ENCODE measurements at regions of chr12 and their contacts with region 1.

Region 1: GRCh38 chr12:92570056-92570753 is 132.6 kb upstream of the PLEKHG7 start:
- DNase-seq: peak; percentile 44 to 84 (median 47)
- ATAC-seq: peak; percentile 85
- H3K4me3 ChIP-seq: no peak overlapping the region
- H3K27ac ChIP-seq: no peak overlapping the region
- H3K4me1 ChIP-seq: no peaks in the 10 kb centered on the region
- H3K27me3 ChIP-seq: no peaks in the 10 kb centered on the region
- CTCF ChIP-seq: peak; percentile 53 to 77 (median 73); a peak in 5 of 6 replicates
- EP300 ChIP-seq: no peak
- POLR2A ChIP-seq: no peak
- RAD21 ChIP-seq: peak; percentile 97 to 98

Region 2: GRCh38 chr12:91361864-91362263 is 1208.3 kb before region 1 on chr12:
- CTCF ChIA-PET with region 1: interaction called, 13 read pairs
- POLR2A ChIA-PET with region 1: no interaction called
- in situ Hi-C with region 1: no loop called
- intact Hi-C with region 1: no loop called
- DNase-seq: peak; percentile 12 to 36 (median 29)
- ATAC-seq: peak; percentile 73
- H3K4me3 ChIP-seq: no peak overlapping the region
- H3K27ac ChIP-seq: no peak overlapping the region
- H3K4me1 ChIP-seq: no peaks in the 10 kb centered on the region
- H3K27me3 ChIP-seq: no peaks in the 10 kb centered on the region
- CTCF ChIP-seq: peak in 1 of 3 experiments; percentile 60; a peak in 3 of 6 replicates
- EP300 ChIP-seq: no peak
- POLR2A ChIP-seq: no peak
- RAD21 ChIP-seq: peak; percentile 40 to 55; a peak in 3 of 4 replicates

Region 3: GRCh38 chr12:91388552-91388965 is 1181.6 kb before region 1 on chr12:
- CTCF ChIA-PET with region 1: interaction called, 24 read pairs
- POLR2A ChIA-PET with region 1: no interaction called
- in situ Hi-C with region 1: loop called (anchors 5 kb)
- intact Hi-C with region 1: no loop called
- DNase-seq: no peak
- ATAC-seq: no peak
- H3K4me3 ChIP-seq: no peak overlapping the region
- H3K27ac ChIP-seq: no peak overlapping the region
- H3K4me1 ChIP-seq: no peaks in the 10 kb centered on the region; a peak in 2 of 5 replicates
- H3K27me3 ChIP-seq: no peaks in the 10 kb centered on the region
- CTCF ChIP-seq: no peak
- EP300 ChIP-seq: no peak
- POLR2A ChIP-seq: no peak
- RAD21 ChIP-seq: no peak

Region 4: GRCh38 chr12:91883781-91884180 is 686.4 kb before region 1 on chr12:
- CTCF ChIA-PET with region 1: no interaction called
- POLR2A ChIA-PET with region 1: no interaction called
- in situ Hi-C with region 1: no loop called
- intact Hi-C with region 1: loop called (anchors 5 kb)
- DNase-seq: no peak
- ATAC-seq: no peak
- H3K4me3 ChIP-seq: no peak overlapping the region
- H3K27ac ChIP-seq: no peak overlapping the region
- H3K4me1 ChIP-seq: no peaks in the 10 kb centered on the region
- H3K27me3 ChIP-seq: no peaks in the 10 kb centered on the region
- CTCF ChIP-seq: no peak
- EP300 ChIP-seq: no peak
- POLR2A ChIP-seq: no peak
- RAD21 ChIP-seq: no peak

Region 5: DNA sequence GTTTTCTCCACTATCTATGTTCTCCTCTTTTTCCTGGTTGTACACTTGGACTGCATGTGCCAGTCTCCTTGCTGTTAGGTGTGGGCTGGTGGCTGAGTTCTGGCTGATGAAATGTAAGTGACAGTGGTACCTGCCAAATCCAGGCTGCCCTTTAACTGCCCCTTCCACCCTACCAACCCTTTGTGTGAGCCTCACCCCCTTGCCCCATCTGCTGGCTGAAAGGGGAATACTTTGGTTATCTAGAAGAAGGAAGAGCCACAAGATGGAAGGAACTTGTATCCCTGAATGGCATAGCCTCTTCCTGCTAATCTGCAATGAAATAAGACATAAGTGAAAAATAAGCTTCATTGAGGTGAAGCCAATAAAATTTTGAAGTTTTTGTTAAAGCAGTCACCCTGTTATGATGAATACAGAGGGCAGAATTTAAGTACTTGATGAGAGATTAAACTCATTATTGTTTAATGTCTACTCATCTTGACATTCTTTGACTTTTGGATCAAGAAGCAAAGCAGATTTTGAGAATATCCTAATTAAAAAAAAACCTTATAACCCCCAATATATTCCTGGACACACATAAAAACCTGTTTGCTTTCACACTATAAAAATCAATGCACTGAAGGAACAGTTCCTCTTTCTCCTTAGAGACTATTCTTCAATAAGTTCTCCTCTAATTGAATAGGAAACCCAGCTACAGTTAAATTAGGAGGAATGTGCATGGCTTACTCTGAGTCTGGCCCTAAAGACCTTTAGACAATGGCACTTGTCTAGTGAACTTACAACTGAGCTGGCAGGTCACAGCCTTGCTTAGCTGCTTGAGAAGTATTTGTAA is 161.9 kb before region 1 on chr12:
- CTCF ChIA-PET with region 1: no interaction called
- POLR2A ChIA-PET with region 1: no interaction called
- in situ Hi-C with region 1: no loop called
- intact Hi-C with region 1: loop called (anchors 2 kb)
- DNase-seq: peak; percentile 23 to 70 (median 41)
- ATAC-seq: peak; percentile 63
- H3K4me3 ChIP-seq: no peak overlapping the region
- H3K27ac ChIP-seq: no peak overlapping the region
- H3K4me1 ChIP-seq: peaks cover 7 to 20% of the 10 kb centered on the region in 2 experiments; a peak in 3 of 5 replicates
- H3K27me3 ChIP-seq: no peaks in the 10 kb centered on the region
- CTCF ChIP-seq: peak; percentile 56 to 68 (median 59)
- EP300 ChIP-seq: no peak; the same call in 1 of the 2 replicates
- POLR2A ChIP-seq: no peak
- RAD21 ChIP-seq: peak; percentile 45 to 79

Region 6: DNA sequence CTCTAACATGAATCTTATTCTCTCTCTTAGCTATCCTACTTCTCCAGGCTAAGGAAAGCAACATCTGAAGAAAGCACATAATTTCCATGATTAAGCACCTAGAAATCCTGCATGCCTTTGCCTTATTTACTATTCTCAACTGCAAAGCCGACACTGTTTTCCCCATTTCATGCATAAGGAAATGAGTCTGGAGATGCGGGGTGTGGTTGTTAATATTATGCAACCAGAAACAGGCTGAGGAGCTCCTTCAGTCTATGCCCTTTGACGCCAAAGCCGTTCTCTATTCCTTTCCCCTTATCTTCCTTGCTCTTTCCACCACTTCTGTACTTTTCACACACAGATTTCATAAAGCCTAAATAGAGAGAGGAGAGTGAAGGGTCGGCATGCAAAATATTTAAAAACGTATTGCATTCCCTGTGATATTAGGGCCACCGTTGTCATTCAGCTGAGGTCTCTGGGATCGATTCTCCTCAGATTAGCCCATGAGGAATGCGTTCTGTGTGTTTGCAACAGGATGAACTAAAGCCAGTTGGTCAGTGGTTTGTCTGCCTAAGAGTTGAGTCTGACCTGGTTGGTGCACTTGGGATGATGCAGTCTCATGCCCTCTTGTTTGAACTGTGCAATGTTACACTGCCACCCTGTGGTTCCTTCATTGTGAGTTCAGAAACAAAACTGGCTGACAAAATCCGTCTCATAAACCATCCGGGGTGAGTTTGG is 79.5 kb after region 1 on chr12:
- CTCF ChIA-PET with region 1: no interaction called
- POLR2A ChIA-PET with region 1: no interaction called
- in situ Hi-C with region 1: no loop called
- intact Hi-C with region 1: loop called (anchors 1 kb)
- DNase-seq: peak; percentile 42 to 77 (median 50)
- ATAC-seq: peak; percentile 97
- H3K4me3 ChIP-seq: no peak overlapping the region
- H3K27ac ChIP-seq: no peak overlapping the region
- H3K4me1 ChIP-seq: no peaks in the 10 kb centered on the region
- H3K27me3 ChIP-seq: peaks cover 8 to 13% of the 10 kb centered on the region in 2 experiments; a peak in 4 of 5 replicates
- CTCF ChIP-seq: peak; percentile 65 to 78 (median 66)
- EP300 ChIP-seq: no peak
- POLR2A ChIP-seq: no peak
- RAD21 ChIP-seq: peak; percentile 81 to 89